Mammary epithelial cell (primary cell): ENCODE measurements at regions of chr10 and their contacts with region 1.

Region 1: DNA sequence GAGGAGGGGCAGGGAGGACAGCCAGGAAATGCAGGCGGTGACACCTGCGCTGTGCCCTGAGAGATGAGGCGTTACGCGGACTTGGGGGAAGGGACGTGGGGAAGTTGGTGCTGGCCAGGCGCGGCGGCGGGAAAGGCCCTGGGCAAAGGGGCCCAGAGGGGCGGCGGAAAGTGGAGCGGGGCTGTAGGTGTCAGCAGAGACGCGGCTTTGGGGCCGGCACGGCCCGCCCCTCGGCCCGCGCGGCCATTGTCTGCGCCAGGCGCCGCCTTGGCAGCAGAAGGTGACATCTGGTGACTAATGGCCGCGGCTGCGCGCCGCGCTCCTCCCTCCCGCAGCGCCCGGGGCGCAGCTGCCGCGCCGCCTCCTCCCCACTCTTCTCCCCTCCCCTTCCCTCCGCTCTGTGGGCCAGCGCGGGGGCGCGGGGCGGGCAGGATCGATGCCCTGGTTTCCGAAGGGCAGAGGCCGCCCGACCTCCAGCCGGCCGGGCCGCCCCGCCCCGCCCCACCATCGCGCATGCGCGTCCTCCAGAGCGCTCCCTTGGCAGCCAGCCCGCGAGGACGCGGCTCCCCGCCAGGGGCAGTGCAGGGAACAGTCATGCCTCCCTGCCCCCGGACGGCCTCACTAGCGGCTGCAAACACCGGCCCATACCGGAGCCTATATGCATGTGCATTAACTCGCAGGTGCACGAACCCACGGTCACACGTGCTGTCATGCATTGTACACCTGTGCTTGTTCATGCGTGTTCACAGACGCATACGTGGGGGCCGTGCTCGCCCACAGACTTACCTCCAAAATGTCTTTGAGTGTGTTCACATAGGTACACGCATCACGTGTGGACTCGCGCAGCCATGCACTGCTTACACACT is 269.6 kb downstream of the RPS24 start:
- DNase-seq: peak; percentile 88
- H3K4me3 ChIP-seq: peak overlapping the region; percentile 53 to 65 (median 64)
- H3K27ac ChIP-seq: no peak overlapping the region
- H3K4me1 ChIP-seq: no peaks in the 10 kb centered on the region
- H3K27me3 ChIP-seq: no peaks in the 10 kb centered on the region
- CTCF ChIP-seq: peak; percentile 53 to 70

Region 2: GRCh38 chr10:77974396-77975074 is 328.7 kb before region 1 on chr10:
- CTCF ChIA-PET with region 1: no interaction called
- dilution Hi-C with region 1: no loop called
- in situ Hi-C with region 1: no loop called
- intact Hi-C with region 1: no loop called
- DNase-seq: peak; percentile 28
- H3K4me3 ChIP-seq: no peak overlapping the region
- H3K27ac ChIP-seq: no peak overlapping the region
- H3K4me1 ChIP-seq: peaks cover 6% of the 10 kb centered on the region
- H3K27me3 ChIP-seq: no peaks in the 10 kb centered on the region
- CTCF ChIP-seq: peak; percentile 39 to 60

Region 3: DNA sequence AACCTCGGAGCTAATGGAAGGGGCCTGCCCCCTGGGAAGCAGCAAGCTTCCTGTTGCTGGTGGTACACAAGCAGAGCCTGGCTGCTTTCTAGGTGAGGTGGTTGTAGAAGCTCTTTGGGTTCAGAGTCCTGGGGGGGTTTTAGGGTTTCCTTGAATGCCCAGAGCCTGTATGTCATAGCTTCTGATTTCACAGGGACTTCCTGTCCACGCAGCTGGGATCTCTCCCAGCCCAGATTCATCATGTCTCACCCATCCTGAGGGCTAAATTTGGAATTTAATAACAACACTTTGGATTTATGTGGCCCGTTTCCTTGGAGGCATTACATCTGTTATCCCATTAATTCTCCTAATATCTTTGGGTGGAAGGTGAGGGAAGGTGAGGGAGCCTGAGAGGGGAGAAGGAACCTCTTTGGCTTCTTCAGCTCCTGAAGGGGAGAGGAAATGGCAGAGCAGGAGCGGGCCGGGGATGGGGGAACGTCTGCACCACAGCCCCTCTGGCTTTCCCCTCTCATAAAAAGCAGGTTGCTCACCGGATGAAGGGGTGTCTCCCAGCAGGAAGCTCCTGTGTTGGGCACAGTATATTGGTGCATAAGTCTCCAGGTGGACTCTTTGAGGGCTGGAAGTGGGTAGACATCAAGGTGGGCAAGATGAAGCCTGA is 249.9 kb before region 1 on chr10:
- CTCF ChIA-PET with region 1: no interaction called
- dilution Hi-C with region 1: loop called (anchors 10 kb)
- in situ Hi-C with region 1: loop called in 1 of 2 experiments (anchors 25 kb)
- intact Hi-C with region 1: no loop called
- DNase-seq: no peak
- H3K4me3 ChIP-seq: no peak overlapping the region
- H3K27ac ChIP-seq: no peak overlapping the region
- H3K4me1 ChIP-seq: no peaks in the 10 kb centered on the region
- H3K27me3 ChIP-seq: peaks cover 2% of the 10 kb centered on the region
- CTCF ChIP-seq: no peak

Region 4: DNA sequence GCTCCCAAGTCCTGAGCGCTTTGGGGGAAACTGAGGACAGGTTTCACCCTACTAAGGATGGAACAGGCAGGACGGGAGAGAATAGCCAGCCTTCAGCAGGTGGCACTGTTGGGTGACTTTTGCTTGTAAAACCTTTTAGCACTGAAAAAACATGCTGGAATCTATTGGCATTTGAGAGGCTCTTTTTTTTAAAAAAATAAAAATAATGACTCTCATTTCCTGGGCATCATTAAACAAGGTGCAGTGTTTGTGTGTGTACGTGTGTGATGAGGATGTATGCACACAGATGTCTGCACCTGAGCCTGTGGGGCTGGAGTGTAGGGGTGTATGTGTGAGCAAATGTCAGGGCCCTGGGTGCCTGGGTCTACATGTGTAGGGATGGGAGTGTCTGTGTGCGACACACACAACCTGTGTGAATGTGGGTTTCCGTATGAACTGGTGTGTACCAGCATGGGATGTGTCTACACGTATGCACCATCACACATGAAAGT is 91.6 kb before region 1 on chr10:
- CTCF ChIA-PET with region 1: no interaction called
- dilution Hi-C with region 1: no loop called
- in situ Hi-C with region 1: no loop called
- intact Hi-C with region 1: loop called (anchors 5 kb)
- DNase-seq: peak; percentile 11
- H3K4me3 ChIP-seq: no peak overlapping the region
- H3K27ac ChIP-seq: no peak overlapping the region
- H3K4me1 ChIP-seq: no peaks in the 10 kb centered on the region
- H3K27me3 ChIP-seq: no peaks in the 10 kb centered on the region
- CTCF ChIP-seq: peak; percentile 31 to 69

Region 5: DNA sequence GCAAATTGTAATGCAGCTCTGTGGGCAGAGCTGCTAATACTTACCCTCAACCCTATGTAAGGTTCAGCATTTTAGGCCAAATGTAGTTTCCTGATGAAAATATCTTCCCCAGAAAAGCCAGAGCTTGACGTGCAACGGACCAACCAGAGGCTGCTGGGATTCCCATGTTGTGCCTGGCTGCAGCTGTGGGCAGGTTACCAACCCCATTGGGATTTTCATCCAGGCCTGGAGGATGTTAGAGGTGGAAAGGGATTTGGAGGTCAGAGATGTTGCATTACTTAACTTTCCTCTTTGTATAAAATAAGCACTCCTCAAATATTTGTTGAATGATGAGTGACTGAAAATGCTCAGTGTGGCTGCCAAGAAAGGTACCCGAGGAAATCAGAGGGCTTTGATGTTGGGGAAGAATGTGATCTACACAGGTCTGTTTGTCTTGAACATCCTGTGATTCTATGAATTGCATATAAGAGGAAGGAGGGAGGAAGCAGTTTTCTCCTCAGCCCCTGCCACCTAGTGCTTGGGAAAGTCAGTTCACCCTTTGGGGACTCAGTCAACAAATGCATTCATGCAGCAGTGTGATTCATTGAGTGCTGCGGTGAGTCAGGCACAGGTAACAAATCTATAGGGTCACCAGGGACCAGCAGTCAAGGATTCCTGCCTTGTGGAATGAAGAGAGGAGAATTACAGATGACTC is 217.7 kb after region 1 on chr10:
- CTCF ChIA-PET with region 1: no interaction called
- dilution Hi-C with region 1: no loop called
- in situ Hi-C with region 1: no loop called
- intact Hi-C with region 1: loop called (anchors 5 kb)
- DNase-seq: peak; percentile 73
- H3K4me3 ChIP-seq: no peak overlapping the region
- H3K27ac ChIP-seq: no peak overlapping the region
- H3K4me1 ChIP-seq: peaks cover 7% of the 10 kb centered on the region
- H3K27me3 ChIP-seq: no peaks in the 10 kb centered on the region
- CTCF ChIP-seq: peak; percentile 43 to 67

Region 6: DNA sequence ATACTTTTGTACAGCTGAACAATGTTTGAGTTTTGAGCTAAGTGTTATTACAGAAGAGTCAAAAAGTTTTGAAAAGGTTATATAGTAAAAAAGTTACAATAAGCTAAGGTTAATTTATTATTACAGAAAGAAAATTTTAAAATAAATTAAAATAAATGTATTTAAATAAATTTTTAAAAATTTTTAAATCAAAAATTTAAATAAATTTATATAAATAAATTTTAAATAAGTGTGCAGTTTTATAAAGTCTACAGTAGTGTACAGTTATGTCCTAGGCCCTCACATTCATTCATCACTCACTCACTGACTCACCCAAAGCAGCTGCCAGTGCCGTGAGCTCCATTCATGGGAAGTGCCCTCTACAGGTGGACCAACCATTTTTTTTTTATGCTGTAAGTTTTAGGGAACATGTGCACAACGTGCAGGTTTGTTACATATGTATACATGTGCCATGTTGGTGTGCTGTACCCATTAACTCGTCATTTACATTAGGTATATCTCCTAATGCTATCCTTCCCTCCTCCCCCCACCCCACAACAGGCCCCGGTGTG is 302.7 kb after region 1 on chr10:
- CTCF ChIA-PET with region 1: interaction called, 5 read pairs
- dilution Hi-C with region 1: no loop called
- in situ Hi-C with region 1: no loop called
- intact Hi-C with region 1: loop called (anchors 2 kb)
- DNase-seq: peak; percentile 61
- H3K4me3 ChIP-seq: no peak overlapping the region
- H3K27ac ChIP-seq: no peak overlapping the region
- H3K4me1 ChIP-seq: no peaks in the 10 kb centered on the region
- H3K27me3 ChIP-seq: peaks cover 3% of the 10 kb centered on the region
- CTCF ChIP-seq: peak; percentile 30 to 51

Region 7: DNA sequence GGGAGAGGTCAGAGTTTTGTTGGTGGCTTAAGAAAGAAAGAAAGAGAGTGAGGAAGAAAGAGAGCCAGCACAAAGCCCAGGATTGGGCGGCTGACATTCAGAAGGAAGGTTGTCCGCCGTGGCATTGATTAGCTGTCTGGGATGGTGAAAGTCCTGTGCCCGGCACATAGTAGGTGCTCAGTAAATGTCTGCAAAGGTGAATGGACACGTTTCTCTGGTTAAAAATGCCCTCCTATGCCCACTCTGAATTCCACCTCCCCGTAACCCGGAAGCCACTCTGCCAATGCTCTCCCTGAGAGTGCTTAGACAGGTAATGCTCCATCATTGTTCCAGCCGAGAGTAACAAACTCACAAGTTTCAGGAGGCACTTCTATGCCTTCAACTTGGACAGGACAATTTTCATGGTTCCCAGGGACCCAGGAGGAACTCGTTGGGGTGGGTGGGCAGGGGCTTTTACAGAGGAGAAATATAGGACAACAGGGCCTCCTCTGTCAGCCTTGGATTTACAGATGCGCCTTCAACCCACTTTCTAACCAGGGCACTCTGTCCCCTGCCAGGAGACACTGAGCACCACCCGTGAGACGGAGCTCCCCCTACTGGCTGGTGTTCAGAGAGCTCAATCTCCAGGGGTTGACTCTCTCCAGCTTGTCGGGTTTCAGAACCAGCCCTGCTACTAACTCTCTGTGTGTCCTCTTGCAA is 354.1 kb after region 1 on chr10:
- CTCF ChIA-PET with region 1: no interaction called
- dilution Hi-C with region 1: no loop called
- in situ Hi-C with region 1: no loop called
- intact Hi-C with region 1: loop called (anchors 10 kb)
- DNase-seq: peak; percentile 37
- H3K4me3 ChIP-seq: no peak overlapping the region
- H3K27ac ChIP-seq: no peak overlapping the region
- H3K4me1 ChIP-seq: no peaks in the 10 kb centered on the region
- H3K27me3 ChIP-seq: no peaks in the 10 kb centered on the region
- CTCF ChIP-seq: peak; percentile 78 to 95

Region 8: GRCh38 chr10:80046629-80047441 is 1743.6 kb after region 1 on chr10:
- CTCF ChIA-PET with region 1: interaction called, 13 read pairs
- dilution Hi-C with region 1: no loop called
- in situ Hi-C with region 1: no loop called
- intact Hi-C with region 1: no loop called
- DNase-seq: peak; percentile 40
- H3K4me3 ChIP-seq: no peak overlapping the region
- H3K27ac ChIP-seq: no peak overlapping the region
- H3K4me1 ChIP-seq: no peaks in the 10 kb centered on the region
- H3K27me3 ChIP-seq: no peaks in the 10 kb centered on the region
- CTCF ChIP-seq: peak; percentile 95 to 98